GM13977 (cell line): ENCODE measurements at regions of chr2 and their contacts with region 1.

Region 1: DNA sequence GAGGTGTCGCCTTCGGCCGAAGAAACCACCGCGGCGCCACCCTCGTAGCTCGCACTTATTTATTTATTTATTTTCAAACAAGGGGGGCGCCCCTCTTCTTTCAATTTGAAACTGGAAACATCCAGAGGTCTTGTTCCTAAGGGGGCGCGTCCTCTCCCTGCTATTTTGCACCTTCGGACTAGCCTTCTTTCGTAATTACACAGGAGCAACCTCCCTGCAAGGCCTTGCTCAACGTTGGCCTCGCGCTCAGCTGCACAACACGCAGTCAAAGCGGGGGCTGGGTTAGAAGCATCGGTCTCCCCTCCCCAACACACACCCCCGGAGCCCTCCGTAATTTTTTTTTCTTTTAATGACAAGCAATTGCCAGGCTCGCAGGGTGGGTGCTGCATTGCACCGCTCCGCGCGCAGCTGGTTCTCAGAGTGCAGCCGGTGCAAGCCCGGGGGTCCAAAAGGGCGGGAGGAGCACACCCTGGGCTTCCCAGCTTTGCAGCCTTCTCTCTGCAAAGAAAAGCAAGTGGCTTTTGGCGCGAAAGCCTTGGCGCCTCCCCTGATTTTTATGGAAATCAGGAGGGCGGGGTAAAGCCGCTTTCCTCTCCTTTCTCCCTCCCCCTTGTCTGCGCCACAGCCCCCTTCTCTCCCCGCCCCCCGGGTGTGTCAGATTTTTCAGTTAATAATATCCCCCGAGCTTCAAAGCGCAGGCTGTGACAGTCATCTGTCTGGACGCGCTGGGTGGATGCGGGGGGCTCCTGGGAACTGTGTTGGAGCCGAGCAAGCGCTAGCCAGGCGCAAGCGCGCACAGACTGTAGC is at the start of gene MYCN:
- DNase-seq: peak; percentile 32
- CTCF ChIP-seq: peak; percentile 84

Region 2: GRCh38 chr2:15636972-15637785 is 302.9 kb before region 1 on chr2:
- in situ Hi-C with region 1: loop called (anchors 25 kb)
- DNase-seq: peak; percentile 51
- CTCF ChIP-seq: peak; percentile 83

Region 3: GRCh38 chr2:16239296-16239850 is 299.3 kb after region 1 on chr2:
- in situ Hi-C with region 1: no loop called
- DNase-seq: no peak
- CTCF ChIP-seq: no peak

Region 4: GRCh38 chr2:16828828-16829160 is 888.7 kb after region 1 on chr2:
- in situ Hi-C with region 1: no loop called
- DNase-seq: no peak
- CTCF ChIP-seq: no peak